Cardiac septum (tissue), 1 donor: ENCODE measurements at regions of chr15 and their contacts with region 1.

Region 1: DNA sequence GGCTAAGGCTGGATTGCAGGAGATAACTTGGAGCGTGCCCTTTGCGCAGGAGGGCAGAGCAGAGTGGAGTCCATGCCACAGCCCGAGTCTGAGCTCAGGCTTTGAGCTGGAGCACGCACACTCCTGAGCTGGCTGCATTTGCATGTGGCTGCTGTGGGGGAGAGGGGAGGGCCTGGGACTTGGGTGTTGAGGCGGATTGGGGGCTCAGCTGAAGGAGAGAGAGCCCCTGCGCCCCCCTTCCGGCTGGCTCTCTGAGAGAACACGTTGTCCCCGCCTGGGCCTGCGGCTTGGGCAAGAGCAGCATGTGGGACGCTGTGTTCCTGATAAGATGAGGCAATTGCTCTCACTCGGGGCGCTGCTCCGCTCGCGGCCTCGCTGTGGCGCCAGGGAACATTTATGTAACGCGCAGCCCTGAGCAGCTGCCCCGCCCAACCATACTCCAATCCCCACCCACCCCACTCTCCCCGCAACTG is 39.1 kb downstream of the KLF13 start:
- DNase-seq: peak; percentile 92

Region 2: DNA sequence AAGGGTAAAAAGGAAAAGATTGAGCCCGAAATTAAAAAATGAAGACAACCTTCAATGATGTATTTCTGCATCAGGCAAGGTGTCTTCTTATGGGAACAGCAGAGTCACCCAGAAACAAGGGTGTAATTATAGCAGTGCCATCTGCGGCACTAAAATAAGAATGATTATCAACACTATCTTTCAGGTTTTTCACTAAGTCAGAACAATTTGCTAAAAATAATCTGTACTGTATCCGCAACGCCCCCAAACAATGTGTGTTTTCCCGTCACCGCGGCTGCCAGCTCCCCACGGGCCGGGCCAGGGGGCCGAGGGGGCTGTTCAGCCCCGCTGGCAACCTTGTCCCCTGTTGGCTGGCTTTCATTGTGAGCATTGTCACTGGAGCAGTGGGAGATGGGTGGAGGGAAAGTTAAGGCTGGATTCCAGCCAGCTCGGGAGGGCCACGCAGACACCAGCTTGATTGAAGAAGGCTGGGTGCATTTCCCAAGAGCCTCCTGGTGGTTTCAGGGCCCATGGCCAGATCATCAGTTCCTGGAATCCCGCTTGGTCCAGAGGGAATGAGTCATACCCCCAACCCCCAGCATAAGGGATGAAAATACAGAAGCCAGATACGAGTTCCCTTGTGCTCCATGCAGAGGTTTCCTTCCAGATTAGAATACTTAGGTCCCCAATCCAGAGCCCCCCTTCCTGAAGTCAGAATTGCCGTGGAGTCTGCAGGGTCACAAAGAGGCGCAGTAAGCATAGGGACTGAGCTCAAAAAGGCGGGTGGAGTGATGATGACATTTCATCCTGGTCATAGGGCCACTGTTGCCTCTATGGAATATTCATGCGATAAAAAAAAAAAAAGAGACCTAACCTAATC is 129.3 kb before region 1 on chr15:
- intact Hi-C with region 1: no loop called
- DNase-seq: peak; percentile 88

Region 3: GRCh38 chr15:31280046-31280830 is 85.5 kb before region 1 on chr15:
- intact Hi-C with region 1: no loop called
- DNase-seq: peak; percentile 65

Region 4: DNA sequence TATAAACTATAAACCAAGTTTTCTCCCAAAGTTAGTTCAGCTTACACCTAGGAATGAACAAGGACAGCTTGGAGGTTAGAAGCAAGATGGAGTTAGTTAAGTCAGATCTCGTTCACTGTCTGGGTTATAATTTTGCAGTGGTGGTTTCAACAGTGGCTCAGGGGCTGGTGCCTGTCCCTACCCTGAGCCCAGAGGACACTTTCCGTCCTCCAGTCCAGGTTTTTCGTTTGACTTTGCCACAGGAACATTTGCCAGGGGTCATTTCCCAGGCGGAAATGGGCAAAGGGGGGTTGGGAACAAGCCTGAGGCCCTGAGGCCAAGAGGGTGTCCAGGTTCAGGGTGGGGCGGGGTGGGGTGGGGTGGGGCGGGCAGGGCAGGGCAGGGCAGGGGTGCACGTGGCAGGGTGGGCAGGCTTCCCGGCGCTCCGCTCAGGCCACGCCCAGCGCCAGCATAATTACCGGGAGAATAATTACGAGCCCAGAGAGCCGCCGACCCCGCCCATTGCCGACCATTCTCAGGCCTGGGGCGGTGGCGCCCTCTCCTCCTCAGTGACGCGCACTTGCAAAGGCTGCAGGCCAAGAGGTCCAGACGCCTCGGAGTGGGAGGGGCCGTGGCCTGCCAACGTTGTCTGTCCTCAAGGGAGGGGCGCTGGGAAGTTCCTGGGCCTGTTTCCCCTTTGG is 31.3 kb after region 1 on chr15:
- intact Hi-C with region 1: loop called (anchors 1 kb)
- DNase-seq: peak; percentile 94

Region 5: GRCh38 chr15:31440754-31441311 is 75.1 kb after region 1 on chr15:
- intact Hi-C with region 1: loop called (anchors 2 kb)
- DNase-seq: peak; percentile 89